ENCODE measurements at regions of chr4 and their contacts with region 1.

Region 1: DNA sequence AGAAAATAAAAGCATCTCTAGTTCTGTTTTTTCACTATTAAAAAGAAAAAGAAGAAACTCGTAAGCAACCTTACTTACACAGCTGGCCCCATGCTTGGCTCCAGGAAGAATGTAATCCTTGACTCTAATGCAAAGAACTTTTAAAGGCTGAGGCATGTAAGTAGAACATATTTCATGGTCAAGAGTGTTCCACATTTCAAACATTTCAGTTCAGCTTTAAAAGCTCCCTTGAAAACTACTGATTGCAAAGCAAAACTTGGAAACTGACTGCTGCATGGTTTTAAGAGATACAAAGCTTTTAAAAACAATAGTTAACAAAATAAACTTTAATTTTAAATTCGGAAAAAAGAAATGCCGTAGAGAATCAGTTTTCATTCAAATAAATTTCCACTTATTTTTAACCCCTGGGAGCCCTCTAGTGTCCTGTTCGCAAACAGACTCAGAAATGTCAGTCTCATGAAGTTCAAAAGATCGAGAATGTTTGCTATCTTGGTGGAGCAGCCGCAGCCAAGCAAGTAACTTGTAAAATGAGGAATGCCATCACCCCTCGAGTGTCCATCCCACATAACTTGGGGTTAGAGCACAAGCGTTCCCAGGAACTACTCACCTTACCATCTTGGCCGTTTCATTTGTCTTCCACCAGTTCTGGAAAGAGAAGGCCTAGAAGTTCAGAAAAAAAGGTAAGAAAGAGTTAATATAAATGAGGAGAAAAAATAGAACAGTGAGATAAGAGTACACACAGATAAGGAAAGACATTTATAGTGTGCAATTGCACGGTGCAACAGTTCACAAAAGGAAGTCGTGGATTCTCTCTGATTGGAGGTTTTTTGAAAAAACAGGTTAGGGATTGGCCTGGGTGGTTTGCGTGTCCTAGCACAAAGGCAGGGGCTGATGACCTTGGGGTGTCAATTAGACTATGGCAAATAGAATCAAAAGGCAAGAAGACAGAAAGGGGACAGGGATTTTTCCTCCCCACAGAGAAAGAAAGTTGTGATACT is at the start of gene GASK1B:
- DNase-seq: peak in 1 of 2 donors; percentile 68
- ATAC-seq: peak; percentile 45 to 75 (median 64)
- H3K4me3 ChIP-seq: peak within 1 kb of the TSS; percentile 47 to 83 (median 74)
- H3K27ac ChIP-seq: peak within 1 kb of the TSS; percentile 83 to 95 (median 90)
- H3K4me1 ChIP-seq: peaks cover 6 to 70% (median 55%) of the 10 kb centered on the region in 9 donors
- H3K27me3 ChIP-seq: peaks cover 0 to 6% (median 0%) of the 10 kb centered on the region in 7 donors
- CTCF ChIP-seq: peak; percentile 44 to 81 (median 71)
- total RNA-seq, gene GASK1B: 50.5 to 109 (median 86.0) TPM

Region 2: GRCh38 chr4:157992038-157992705 is 180.4 kb before region 1 on chr4:
- intact Hi-C with region 1: loop called in 9 of 10 experiments (anchors 1 to 5 kb)
- DNase-seq: peak in 1 of 2 donors; percentile 87
- ATAC-seq: peak in 7 of 8 donors; percentile 75 to 94 (median 86)
- H3K4me3 ChIP-seq: peak overlapping the region in 9 of 10 donors; percentile 14 to 54 (median 43)
- H3K27ac ChIP-seq: peak overlapping the region; percentile 42 to 87 (median 74)
- H3K4me1 ChIP-seq: peaks cover 0 to 33% (median 12%) of the 10 kb centered on the region in 9 donors
- H3K27me3 ChIP-seq: no peaks in the 10 kb centered on the region
- CTCF ChIP-seq: peak; percentile 58 to 87 (median 77)

Region 3: DNA sequence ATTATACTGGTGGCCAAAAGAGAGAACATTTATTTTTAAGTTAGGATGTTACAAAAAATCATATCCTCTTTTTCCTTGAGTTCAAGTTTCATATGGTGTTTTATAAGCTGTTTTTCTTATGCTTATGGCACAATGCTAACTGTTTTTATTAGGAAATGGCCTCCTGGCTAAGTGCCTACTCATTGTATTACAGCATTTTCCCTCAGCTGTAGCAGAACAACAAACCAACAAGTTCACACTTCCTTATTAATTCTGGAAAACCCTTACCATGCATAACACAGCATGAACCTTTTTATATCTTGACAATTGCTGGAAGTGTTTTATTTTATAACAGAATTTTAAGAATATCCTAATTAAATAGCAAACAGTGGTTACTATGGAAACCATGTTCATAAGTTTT is 165.6 kb before region 1 on chr4:
- intact Hi-C with region 1: loop called in 4 of 10 experiments (anchors 5 kb)
- DNase-seq: peak in 1 of 2 donors; percentile 74
- ATAC-seq: peak; percentile 80 to 92 (median 88)
- H3K4me3 ChIP-seq: no peak overlapping the region
- H3K27ac ChIP-seq: peak overlapping the region in 8 of 10 donors; percentile 45 to 79 (median 70)
- H3K4me1 ChIP-seq: peaks cover 0 to 80% (median 58%) of the 10 kb centered on the region in 9 donors
- H3K27me3 ChIP-seq: no peaks in the 10 kb centered on the region
- CTCF ChIP-seq: no peak

Region 4: GRCh38 chr4:158056689-158057245 is 115.8 kb before region 1 on chr4:
- intact Hi-C with region 1: loop called in 1 of 10 experiments (anchors 5 kb)
- DNase-seq: no peak
- ATAC-seq: peak in 6 of 8 donors; percentile 38 to 73 (median 54)
- H3K4me3 ChIP-seq: no peak overlapping the region
- H3K27ac ChIP-seq: peak overlapping the region in 3 of 10 donors; percentile 11 to 22 (median 20)
- H3K4me1 ChIP-seq: peaks cover 0 to 16% (median 4%) of the 10 kb centered on the region in 9 donors
- H3K27me3 ChIP-seq: no peaks in the 10 kb centered on the region
- CTCF ChIP-seq: no peak

Region 5: GRCh38 chr4:158121187-158121586 is 51.4 kb before region 1 on chr4:
- intact Hi-C with region 1: loop called in 2 of 10 experiments (anchors 2 to 5 kb)
- DNase-seq: peak in 1 of 2 donors; percentile 36
- ATAC-seq: peak; percentile 76 to 90 (median 86)
- H3K4me3 ChIP-seq: peak overlapping the region in 1 of 10 donors; percentile 10
- H3K27ac ChIP-seq: peak overlapping the region in 7 of 10 donors; percentile 13 to 70 (median 57)
- H3K4me1 ChIP-seq: peaks cover 0 to 38% (median 13%) of the 10 kb centered on the region in 9 donors
- H3K27me3 ChIP-seq: no peaks in the 10 kb centered on the region
- CTCF ChIP-seq: no peak

Region 6: GRCh38 chr4:158129694-158130093 is 42.9 kb before region 1 on chr4:
- intact Hi-C with region 1: loop called in 2 of 10 experiments (anchors 5 kb)
- DNase-seq: no peak
- ATAC-seq: no peak
- H3K4me3 ChIP-seq: no peak overlapping the region
- H3K27ac ChIP-seq: no peak overlapping the region
- H3K4me1 ChIP-seq: peaks cover 0 to 51% (median 32%) of the 10 kb centered on the region in 9 donors
- H3K27me3 ChIP-seq: no peaks in the 10 kb centered on the region
- CTCF ChIP-seq: no peak